MCF 10A (cell line): ENCODE measurements at regions of chr17 and their contacts with region 1.

Region 1: DNA sequence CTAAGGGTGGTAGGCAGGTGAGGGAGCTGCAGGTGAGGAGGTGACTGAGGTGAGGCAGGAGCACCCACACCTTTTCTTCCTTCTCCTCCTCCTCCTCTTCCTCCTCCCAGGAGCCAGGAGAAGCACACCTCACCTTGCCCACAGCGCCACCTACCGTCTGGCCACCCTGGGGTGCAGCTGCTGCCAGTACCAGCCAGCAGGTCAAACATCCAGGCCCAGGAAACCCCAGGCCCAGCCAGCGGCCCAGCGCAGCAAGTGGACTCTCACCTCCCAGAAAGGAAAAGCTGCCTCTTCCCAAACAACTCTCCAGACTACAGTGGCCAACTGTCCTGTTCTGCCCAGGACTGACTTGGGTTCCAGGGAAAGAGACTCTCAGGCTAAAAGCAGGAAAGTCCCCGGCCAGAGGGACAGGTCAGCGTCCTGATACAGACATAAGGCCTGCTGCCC is 22.7 kb downstream of the PEMT start:
- DNase-seq: peak; percentile 64
- H3K4me3 Mint-ChIP-seq: no peak overlapping the region
- H3K27ac Mint-ChIP-seq: no peak overlapping the region
- H3K4me1 Mint-ChIP-seq: no peaks in the 10 kb centered on the region
- H3K27me3 Mint-ChIP-seq: no peaks in the 10 kb centered on the region
- CTCF ChIP-seq: peak; percentile 74

Region 2: GRCh38 chr17:17591355-17592298 is 22.9 kb after region 1 on chr17 and contains the start of gene PEMT:
- CTCF ChIA-PET with region 1: interaction called, 10 read pairs
- POLR2A ChIA-PET with region 1: no interaction called
- intact Hi-C with region 1: no loop called
- DNase-seq: peak; percentile 98
- H3K4me3 Mint-ChIP-seq: peak within 1 kb of the TSS; percentile 82
- H3K27ac Mint-ChIP-seq: peak within 1 kb of the TSS; percentile 80
- H3K4me1 Mint-ChIP-seq: peaks cover 19% of the 10 kb centered on the region
- H3K27me3 Mint-ChIP-seq: no peaks in the 10 kb centered on the region
- CTCF ChIP-seq: no peak
- total RNA-seq, gene PEMT: 37.0 and 49.8 TPM in 2 replicates